Heart left ventricle (tissue), 16 donors: ENCODE measurements at regions of chrX and their contacts with region 1.

Region 1: DNA sequence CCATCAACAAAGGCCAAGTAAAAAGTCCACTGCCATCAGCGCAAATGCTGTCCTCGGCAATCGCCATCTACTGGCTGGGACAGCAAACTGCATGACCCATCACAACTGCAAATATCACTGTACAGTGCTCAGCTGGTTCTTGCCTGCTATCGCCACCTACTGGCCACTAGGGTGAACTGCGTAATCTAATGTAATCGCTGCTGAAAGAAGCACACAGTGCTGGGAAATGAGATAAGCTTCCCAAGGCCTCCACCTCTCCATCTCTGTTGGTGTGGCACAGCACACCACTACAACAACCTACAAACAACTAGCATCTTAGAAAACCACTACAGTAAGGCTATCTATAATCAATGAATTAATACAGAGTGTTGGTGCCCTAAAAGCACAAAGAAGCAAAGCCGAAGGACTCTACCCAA is 298.3 kb downstream of the TEX13A start:
- DNase-seq: peak; percentile 17 to 52 (median 42)
- ATAC-seq: peak in 3 of 4 donors; percentile 20 to 85 (median 67)
- H3K4me3 ChIP-seq: no peak overlapping the region
- H3K27ac ChIP-seq: no peak overlapping the region
- H3K4me1 ChIP-seq: no peaks in the 10 kb centered on the region
- H3K27me3 ChIP-seq: peaks cover 0 to 11% (median 0%) of the 10 kb centered on the region in 9 donors
- CTCF ChIP-seq: peak; percentile 60 to 96 (median 72)
- POLR2A ChIP-seq: no peak

Region 2: GRCh38 chrX:104565791-104566680 is 356.2 kb before region 1 on chrX and contains the start of gene IL1RAPL2:
- intact Hi-C with region 1: loop called in 1 of 10 experiments (anchors 5 kb)
- DNase-seq: peak in 1 of 5 donors; percentile 45
- ATAC-seq: peak in 2 of 4 donors; percentile 38 to 53
- H3K4me3 ChIP-seq: peak within 1 kb of the TSS in 11 of 12 donors; percentile 10 to 34 (median 19)
- H3K27ac ChIP-seq: no peak within 1 kb of the TSS
- H3K4me1 ChIP-seq: no peaks in the 10 kb centered on the region
- H3K27me3 ChIP-seq: peaks cover 0 to 50% (median 14%) of the 10 kb centered on the region in 9 donors
- CTCF ChIP-seq: peak in 9 of 12 donors; percentile 7 to 47 (median 33)
- POLR2A ChIP-seq: no peak
- total RNA-seq, gene IL1RAPL2: 0.08 to 0.16 (median 0.10) TPM in 3 of 9 donors, not detected in the others

Region 3: GRCh38 chrX:104668550-104668949 is 253.7 kb before region 1 on chrX:
- intact Hi-C with region 1: loop called in 1 of 10 experiments (anchors 10 kb)
- DNase-seq: no peak
- ATAC-seq: no peak
- H3K4me3 ChIP-seq: no peak overlapping the region
- H3K27ac ChIP-seq: no peak overlapping the region
- H3K4me1 ChIP-seq: no peaks in the 10 kb centered on the region
- H3K27me3 ChIP-seq: peaks cover 0 to 12% (median 0%) of the 10 kb centered on the region in 9 donors
- CTCF ChIP-seq: peak in 6 of 12 donors; percentile 5 to 28 (median 19)
- POLR2A ChIP-seq: no peak